Left ventricle myocardium inferior (tissue), 1 donor: ENCODE measurements at regions of chr5 and their contacts with region 1.

Region 1: DNA sequence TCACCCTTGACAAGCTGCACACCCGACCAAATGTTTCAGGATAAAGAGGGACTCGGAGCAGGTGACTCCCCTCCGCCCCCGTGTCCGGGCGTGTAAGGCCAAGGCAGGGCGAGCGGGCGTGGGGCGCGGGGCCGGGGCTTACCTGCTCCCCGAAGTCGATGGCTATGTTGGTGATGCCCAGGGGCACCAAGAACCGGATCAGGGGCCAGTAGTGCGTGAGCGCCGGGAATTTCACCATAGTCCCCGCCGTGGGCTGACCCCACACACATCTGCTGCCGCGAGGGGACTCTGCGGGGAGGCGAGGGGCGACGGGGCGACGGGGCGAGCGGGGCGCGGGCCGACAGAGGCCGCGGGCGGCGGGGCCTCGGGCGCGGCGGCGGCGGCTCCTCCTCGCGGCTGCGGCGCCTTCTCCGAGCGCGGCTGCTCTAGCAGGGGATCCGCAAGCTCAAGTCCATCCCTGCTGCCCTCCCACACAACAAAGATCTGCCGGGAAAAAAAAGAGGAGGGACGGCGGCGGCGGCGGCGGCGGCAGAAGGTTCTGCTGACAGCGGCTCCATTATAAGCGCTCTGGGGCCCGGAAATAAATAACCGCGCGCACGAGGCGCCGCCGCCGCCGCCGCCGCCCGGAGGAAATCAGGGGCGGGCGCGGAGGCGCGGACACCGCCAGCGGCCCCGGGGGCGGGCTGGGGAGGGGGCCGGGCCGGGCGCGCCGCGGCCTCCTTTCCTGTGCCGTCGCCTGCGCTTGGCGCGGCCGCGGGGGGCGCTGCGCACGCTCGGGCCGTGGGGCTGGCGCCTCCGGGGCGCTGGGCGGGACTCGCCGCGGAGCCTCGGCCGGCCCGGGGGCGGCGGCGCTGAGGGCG is at the start of gene ANKH:
- DNase-seq: peak; percentile 86
- H3K4me3 ChIP-seq: peak within 1 kb of the TSS; percentile 91
- H3K27ac ChIP-seq: peak within 1 kb of the TSS; percentile 99
- H3K4me1 ChIP-seq: peaks cover 44% of the 10 kb centered on the region
- H3K27me3 ChIP-seq: no peaks in the 10 kb centered on the region
- CTCF ChIP-seq: no peak
- total RNA-seq, gene ANKH: 227 TPM

Region 2: DNA sequence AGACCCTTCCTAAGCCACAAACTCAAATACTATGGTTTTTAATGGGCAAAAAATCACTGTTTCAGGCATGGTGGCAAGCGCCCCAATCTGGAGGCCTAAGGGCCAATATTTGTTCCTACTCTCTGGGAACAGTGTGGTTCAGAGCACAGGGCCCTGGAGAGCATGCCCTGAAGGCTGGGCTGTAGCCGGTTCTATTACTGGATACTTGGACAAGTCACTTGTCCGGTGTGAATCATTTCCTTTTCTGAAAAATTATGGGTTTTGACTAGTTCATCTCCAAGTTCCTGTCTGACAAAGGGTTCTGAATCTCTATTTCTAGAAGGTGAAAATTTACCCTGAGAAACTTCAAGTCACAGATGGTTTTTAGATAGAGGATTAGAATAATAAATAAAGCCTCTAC is 131.9 kb before region 1 on chr5:
- intact Hi-C with region 1: loop called (anchors 10 kb)
- DNase-seq: no peak
- H3K4me3 ChIP-seq: no peak overlapping the region
- H3K27ac ChIP-seq: peak overlapping the region; percentile 48
- H3K4me1 ChIP-seq: peaks cover 87% of the 10 kb centered on the region
- H3K27me3 ChIP-seq: no peaks in the 10 kb centered on the region
- CTCF ChIP-seq: no peak

Region 3: GRCh38 chr5:14753912-14754311 is 117.5 kb before region 1 on chr5:
- intact Hi-C with region 1: no loop called
- DNase-seq: no peak
- H3K4me3 ChIP-seq: no peak overlapping the region
- H3K27ac ChIP-seq: peak overlapping the region; percentile 79
- H3K4me1 ChIP-seq: peaks cover 27% of the 10 kb centered on the region
- H3K27me3 ChIP-seq: no peaks in the 10 kb centered on the region
- CTCF ChIP-seq: no peak

Region 4: GRCh38 chr5:14937254-14937653 is 65.8 kb after region 1 on chr5:
- intact Hi-C with region 1: no loop called
- DNase-seq: no peak
- H3K4me3 ChIP-seq: peak overlapping the region; percentile 8
- H3K27ac ChIP-seq: peak overlapping the region; percentile 68
- H3K4me1 ChIP-seq: peaks cover 8% of the 10 kb centered on the region
- H3K27me3 ChIP-seq: no peaks in the 10 kb centered on the region
- CTCF ChIP-seq: no peak

Region 5: GRCh38 chr5:14996997-14997396 is 125.6 kb after region 1 on chr5:
- intact Hi-C with region 1: loop called (anchors 10 kb)
- DNase-seq: no peak
- H3K4me3 ChIP-seq: no peak overlapping the region
- H3K27ac ChIP-seq: no peak overlapping the region
- H3K4me1 ChIP-seq: no peaks in the 10 kb centered on the region
- H3K27me3 ChIP-seq: no peaks in the 10 kb centered on the region
- CTCF ChIP-seq: no peak